ENCODE measurements at regions of chr17 and their contacts with region 1.

Region 1: DNA sequence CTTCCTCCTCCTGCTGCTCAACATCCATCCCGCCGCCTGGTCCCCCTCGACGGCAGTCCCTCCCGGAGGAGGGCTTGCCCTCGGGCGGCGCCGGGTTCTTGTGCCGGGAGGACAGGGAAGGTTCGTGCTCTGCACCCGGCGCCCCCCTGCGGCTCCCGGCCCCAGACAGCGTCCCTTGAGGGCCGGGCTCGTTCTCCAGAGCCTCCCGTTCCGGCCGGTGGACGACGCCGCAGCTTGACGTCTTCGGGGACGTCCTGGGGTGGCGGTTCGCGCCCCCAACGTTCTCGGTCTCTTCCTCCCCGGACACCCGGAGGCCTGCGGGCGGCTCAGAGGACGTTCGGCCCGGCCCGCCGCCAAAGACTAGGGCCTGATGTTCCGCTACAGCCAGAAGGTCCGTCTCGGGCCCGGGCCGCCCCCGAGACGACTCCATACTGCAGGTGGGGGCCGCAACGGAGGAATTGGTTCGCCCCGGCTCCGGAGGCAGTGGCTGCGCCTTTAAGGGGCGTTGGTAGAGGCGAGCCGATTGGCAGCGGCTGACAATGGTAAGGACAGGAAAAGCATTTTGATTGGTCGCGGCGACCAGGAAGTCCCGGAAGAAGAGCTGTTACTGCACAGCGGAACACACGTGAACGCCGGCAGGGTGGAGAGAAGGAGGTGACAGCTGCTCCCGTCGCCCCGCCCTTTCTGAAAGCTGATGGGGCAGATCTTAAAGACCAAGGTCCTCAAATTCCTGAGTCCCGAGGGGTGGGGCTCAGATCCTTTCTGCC is at the start of gene BORCS6:
- DNase-seq: peak; percentile 96
- ATAC-seq: peak; percentile 64
- H3K4me3 ChIP-seq: peak within 1 kb of the TSS; percentile 75 to 83
- H3K27ac ChIP-seq: peak within 1 kb of the TSS; percentile 89
- H3K4me1 ChIP-seq: peaks cover 32 to 64% of the 10 kb centered on the region in 2 experiments
- H3K27me3 ChIP-seq: no peaks in the 10 kb centered on the region
- CTCF ChIP-seq: no peak
- POLR2A ChIP-seq: no peak
- RAD21 ChIP-seq: no peak
- total RNA-seq, gene BORCS6: 6.4 TPM

Region 2: GRCh38 chr17:7147772-7148171 is 1042.1 kb before region 1 on chr17:
- CTCF ChIA-PET with region 1: no interaction called
- POLR2A ChIA-PET with region 1: no interaction called
- RAD21 ChIA-PET with region 1: no interaction called
- intact Hi-C with region 1: no loop called
- DNase-seq: no peak
- ATAC-seq: peak; percentile 67
- H3K4me3 ChIP-seq: no peak overlapping the region
- H3K27ac ChIP-seq: no peak overlapping the region
- H3K4me1 ChIP-seq: no peaks in the 10 kb centered on the region
- H3K27me3 ChIP-seq: no peaks in the 10 kb centered on the region
- CTCF ChIP-seq: no peak
- POLR2A ChIP-seq: no peak
- RAD21 ChIP-seq: no peak

Region 3: GRCh38 chr17:8068736-8069586 is 120.9 kb before region 1 on chr17:
- CTCF ChIA-PET with region 1: no interaction called
- POLR2A ChIA-PET with region 1: no interaction called
- RAD21 ChIA-PET with region 1: no interaction called
- intact Hi-C with region 1: no loop called
- DNase-seq: no peak
- ATAC-seq: no peak
- H3K4me3 ChIP-seq: no peak overlapping the region
- H3K27ac ChIP-seq: no peak overlapping the region
- H3K4me1 ChIP-seq: peaks cover 0 to 9% of the 10 kb centered on the region in 2 experiments; a peak in 1 of 4 replicates
- H3K27me3 ChIP-seq: peaks cover 3% of the 10 kb centered on the region; the same call in 1 of the 2 replicates
- CTCF ChIP-seq: no peak
- POLR2A ChIP-seq: no peak
- RAD21 ChIP-seq: no peak

Region 4: GRCh38 chr17:8138672-8139371 is 51.1 kb before region 1 on chr17:
- CTCF ChIA-PET with region 1: interaction called, 4 read pairs
- POLR2A ChIA-PET with region 1: interaction called, 3 read pairs
- RAD21 ChIA-PET with region 1: no interaction called
- intact Hi-C with region 1: loop called (anchors 5 kb)
- DNase-seq: peak; percentile 95
- ATAC-seq: peak; percentile 89
- H3K4me3 ChIP-seq: peak overlapping the region; percentile 14 to 48; a peak in 3 of 4 replicates
- H3K27ac ChIP-seq: peak overlapping the region; percentile 63
- H3K4me1 ChIP-seq: peaks cover 30 to 61% of the 10 kb centered on the region in 2 experiments
- H3K27me3 ChIP-seq: no peaks in the 10 kb centered on the region
- CTCF ChIP-seq: peak; percentile 86 to 87 (median 87)
- POLR2A ChIP-seq: no peak
- RAD21 ChIP-seq: peak; percentile 88

Region 5: GRCh38 chr17:8209909-8210760 is 20.2 kb after region 1 on chr17 and contains the start of gene AURKB:
- CTCF ChIA-PET with region 1: interaction called, 4 read pairs
- POLR2A ChIA-PET with region 1: interaction called, 21 read pairs
- RAD21 ChIA-PET with region 1: no interaction called
- intact Hi-C with region 1: no loop called
- DNase-seq: peak; percentile 92
- ATAC-seq: peak; percentile 77
- H3K4me3 ChIP-seq: peak within 1 kb of the TSS; percentile 78 to 95
- H3K27ac ChIP-seq: peak within 1 kb of the TSS; percentile 92
- H3K4me1 ChIP-seq: peaks cover 25 to 53% of the 10 kb centered on the region in 2 experiments; a peak in 3 of 4 replicates
- H3K27me3 ChIP-seq: no peaks in the 10 kb centered on the region
- CTCF ChIP-seq: no peak
- POLR2A ChIP-seq: peak; percentile 92
- RAD21 ChIP-seq: no peak
- total RNA-seq, gene AURKB: 141 TPM